ENCODE measurements at regions of chr1 and their contacts with region 1.

Region 1: GRCh38 chr1:155859234-155859829 is at the start of gene SYT11:
- DNase-seq: peak; percentile 78 to 93 (median 90)
- ATAC-seq: peak; percentile 90
- H3K4me3 ChIP-seq: peak within 1 kb of the TSS; percentile 62
- H3K4me3 Mint-ChIP-seq: peak within 1 kb of the TSS; percentile 75 to 95 (median 92)
- H3K27ac ChIP-seq: peak within 1 kb of the TSS; percentile 72
- H3K27ac Mint-ChIP-seq: peak within 1 kb of the TSS; percentile 64 to 97 (median 86)
- H3K4me1 ChIP-seq: peaks cover 17 to 25% of the 10 kb centered on the region in 2 donors
- H3K4me1 Mint-ChIP-seq: peaks cover 0 to 51% (median 39%) of the 10 kb centered on the region in 7 donors
- H3K27me3 ChIP-seq: no peaks in the 10 kb centered on the region
- H3K27me3 Mint-ChIP-seq: peaks cover 0 to 24% (median 11%) of the 10 kb centered on the region in 5 donors
- total RNA-seq, gene SYT11: 1.4 to 22.9 (median 2.7) TPM

Region 2: GRCh38 chr1:153922972-153923925 is 1936.1 kb before region 1 on chr1 and contains the start of gene GATAD2B:
- CTCF ChIA-PET with region 1: no interaction called
- POLR2A ChIA-PET with region 1: no interaction called
- intact Hi-C with region 1: loop called in 1 of 2 experiments (anchors 1 kb)
- DNase-seq: peak; percentile 86 to 100 (median 99)
- ATAC-seq: peak; percentile 94
- H3K4me3 ChIP-seq: peak within 1 kb of the TSS; percentile 87
- H3K4me3 Mint-ChIP-seq: peak within 1 kb of the TSS; percentile 83 to 96 (median 94)
- H3K27ac ChIP-seq: peak within 1 kb of the TSS; percentile 97
- H3K27ac Mint-ChIP-seq: peak within 1 kb of the TSS; percentile 90 to 99 (median 97)
- H3K4me1 ChIP-seq: peaks cover 35% of the 10 kb centered on the region in 2 donors
- H3K4me1 Mint-ChIP-seq: peaks cover 31 to 53% (median 44%) of the 10 kb centered on the region in 7 donors
- H3K27me3 ChIP-seq: no peaks in the 10 kb centered on the region
- H3K27me3 Mint-ChIP-seq: peaks cover 0 to 3% (median 0%) of the 10 kb centered on the region in 5 donors
- total RNA-seq, gene GATAD2B: 67.3 to 102 (median 75.5) TPM

Region 3: DNA sequence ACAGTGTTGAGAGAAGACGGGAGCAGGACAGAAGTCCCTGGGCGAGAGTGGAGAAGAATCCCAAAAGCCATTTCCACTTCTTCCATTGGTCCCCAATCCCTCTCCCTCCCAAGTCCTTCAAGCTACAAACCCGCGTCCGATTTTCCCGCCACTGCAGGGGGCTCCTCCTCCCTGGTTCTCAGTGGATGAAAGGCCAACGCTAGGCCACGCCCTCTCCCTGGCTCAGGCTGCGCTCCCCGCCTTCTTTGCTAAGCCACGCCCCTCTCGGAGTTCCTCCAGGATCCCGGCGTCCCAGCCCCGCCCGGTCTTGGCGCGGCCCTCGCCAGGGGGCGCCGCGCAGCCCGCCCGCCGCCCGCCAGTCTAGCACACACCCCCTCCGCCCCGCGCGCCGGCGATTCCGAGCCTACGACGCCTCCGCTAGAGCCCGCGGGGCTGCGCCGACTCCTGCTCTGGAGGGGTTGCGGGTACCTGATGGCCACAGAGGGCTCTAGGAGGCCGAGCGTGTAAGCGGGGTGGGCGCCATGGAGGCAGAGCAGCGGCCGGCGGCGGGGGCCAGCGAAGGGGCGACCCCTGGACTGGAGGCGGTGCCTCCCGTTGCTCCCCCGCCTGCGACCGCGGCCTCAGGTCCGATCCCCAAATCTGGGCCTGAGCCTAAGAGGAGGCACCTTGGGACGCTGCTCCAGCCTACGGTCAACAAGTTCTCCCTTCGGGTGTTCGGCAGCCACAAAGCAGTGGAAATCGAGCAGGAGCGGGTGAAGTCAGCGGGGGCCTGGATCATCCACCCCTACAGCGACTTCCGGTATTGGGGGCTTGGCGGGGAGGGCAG is 582.0 kb before region 1 on chr1 and contains the start of gene HCN3:
- CTCF ChIA-PET with region 1: no interaction called
- POLR2A ChIA-PET with region 1: no interaction called
- intact Hi-C with region 1: loop called (anchors 2 to 5 kb)
- DNase-seq: peak; percentile 68 to 95 (median 70)
- ATAC-seq: peak; percentile 71
- H3K4me3 ChIP-seq: peak within 1 kb of the TSS; percentile 59
- H3K4me3 Mint-ChIP-seq: peak within 1 kb of the TSS; percentile 75 to 90 (median 86)
- H3K27ac ChIP-seq: peak within 1 kb of the TSS; percentile 36
- H3K27ac Mint-ChIP-seq: peak within 1 kb of the TSS in 8 of 9 donors; percentile 44 to 83 (median 69)
- H3K4me1 ChIP-seq: peaks cover 18 to 19% of the 10 kb centered on the region in 2 donors
- H3K4me1 Mint-ChIP-seq: peaks cover 24 to 47% (median 38%) of the 10 kb centered on the region in 7 donors
- H3K27me3 ChIP-seq: no peaks in the 10 kb centered on the region
- H3K27me3 Mint-ChIP-seq: peaks cover 0 to 11% (median 0%) of the 10 kb centered on the region in 5 donors
- total RNA-seq, gene HCN3: 1.6 to 3.3 (median 2.8) TPM

Region 4: GRCh38 chr1:155623357-155623756 is 236.0 kb before region 1 on chr1:
- CTCF ChIA-PET with region 1: no interaction called
- POLR2A ChIA-PET with region 1: no interaction called
- intact Hi-C with region 1: no loop called
- DNase-seq: no peak
- ATAC-seq: no peak
- H3K4me3 ChIP-seq: no peak overlapping the region
- H3K4me3 Mint-ChIP-seq: no peak overlapping the region
- H3K27ac ChIP-seq: no peak overlapping the region
- H3K27ac Mint-ChIP-seq: no peak overlapping the region
- H3K4me1 ChIP-seq: no peaks in the 10 kb centered on the region
- H3K4me1 Mint-ChIP-seq: peaks cover 0 to 6% (median 0%) of the 10 kb centered on the region in 7 donors
- H3K27me3 ChIP-seq: no peaks in the 10 kb centered on the region
- H3K27me3 Mint-ChIP-seq: peaks cover 0 to 9% (median 0%) of the 10 kb centered on the region in 5 donors

Region 5: GRCh38 chr1:155744711-155745283 is 114.5 kb before region 1 on chr1:
- CTCF ChIA-PET with region 1: interaction called, 3 read pairs
- POLR2A ChIA-PET with region 1: no interaction called
- intact Hi-C with region 1: loop called (anchors 2 to 5 kb)
- DNase-seq: no peak
- ATAC-seq: no peak
- H3K4me3 ChIP-seq: peak overlapping the region; percentile 80
- H3K4me3 Mint-ChIP-seq: peak overlapping the region; percentile 89 to 98 (median 95)
- H3K27ac ChIP-seq: peak overlapping the region; percentile 78
- H3K27ac Mint-ChIP-seq: peak overlapping the region; percentile 90 to 97 (median 92)
- H3K4me1 ChIP-seq: peaks cover 6 to 7% of the 10 kb centered on the region in 2 donors
- H3K4me1 Mint-ChIP-seq: peaks cover 4 to 12% (median 8%) of the 10 kb centered on the region in 7 donors
- H3K27me3 ChIP-seq: no peaks in the 10 kb centered on the region
- H3K27me3 Mint-ChIP-seq: no peaks in the 10 kb centered on the region

Region 6: GRCh38 chr1:155978325-155978972 is 119.1 kb after region 1 on chr1 and contains the start of gene ARHGEF2:
- CTCF ChIA-PET with region 1: no interaction called
- POLR2A ChIA-PET with region 1: no interaction called
- intact Hi-C with region 1: loop called (anchors 2 kb)
- DNase-seq: peak; percentile 49 to 81 (median 68)
- ATAC-seq: peak; percentile 78
- H3K4me3 ChIP-seq: peak within 1 kb of the TSS; percentile 74
- H3K4me3 Mint-ChIP-seq: peak within 1 kb of the TSS; percentile 89 to 98 (median 94)
- H3K27ac ChIP-seq: peak within 1 kb of the TSS; percentile 90
- H3K27ac Mint-ChIP-seq: peak within 1 kb of the TSS; percentile 77 to 98 (median 95)
- H3K4me1 ChIP-seq: peaks cover 55 to 58% of the 10 kb centered on the region in 2 donors
- H3K4me1 Mint-ChIP-seq: peaks cover 59 to 79% (median 69%) of the 10 kb centered on the region in 7 donors
- H3K27me3 ChIP-seq: no peaks in the 10 kb centered on the region
- H3K27me3 Mint-ChIP-seq: no peaks in the 10 kb centered on the region
- total RNA-seq, gene ARHGEF2: 108 to 236 (median 182) TPM

Region 7: GRCh38 chr1:156282479-156283222 is 423.3 kb after region 1 on chr1 and contains the start of gene SMG5:
- CTCF ChIA-PET with region 1: no interaction called
- POLR2A ChIA-PET with region 1: interaction called, 3 read pairs
- intact Hi-C with region 1: loop called in 1 of 2 experiments (anchors 1 kb)
- DNase-seq: peak; percentile 89 to 98 (median 96)
- ATAC-seq: peak; percentile 95
- H3K4me3 ChIP-seq: peak within 1 kb of the TSS; percentile 93
- H3K4me3 Mint-ChIP-seq: peak within 1 kb of the TSS; percentile 85 to 99 (median 94)
- H3K27ac ChIP-seq: peak within 1 kb of the TSS; percentile 89
- H3K27ac Mint-ChIP-seq: peak within 1 kb of the TSS; percentile 89 to 98 (median 95)
- H3K4me1 ChIP-seq: peaks cover 15 to 22% of the 10 kb centered on the region in 2 donors
- H3K4me1 Mint-ChIP-seq: peaks cover 29 to 51% (median 39%) of the 10 kb centered on the region in 7 donors
- H3K27me3 ChIP-seq: no peaks in the 10 kb centered on the region
- H3K27me3 Mint-ChIP-seq: peaks cover 0 to 3% (median 0%) of the 10 kb centered on the region in 5 donors
- total RNA-seq, gene SMG5: 65.7 to 74.0 (median 69.4) TPM